Endothelial cell of umbilical vein (primary cell): ENCODE measurements at regions of chr5 and their contacts with region 1.

Region 1: GRCh38 chr5:10695055-10695649 is 65.9 kb downstream of the DAP start:
- DNase-seq: peak; percentile 72
- H3K4me3 ChIP-seq: no peak overlapping the region
- H3K27ac ChIP-seq: no peak overlapping the region
- H3K4me1 ChIP-seq: peaks cover 15% of the 10 kb centered on the region
- H3K27me3 ChIP-seq: no peaks in the 10 kb centered on the region
- CTCF ChIP-seq: peak; percentile 76 to 77
- POLR2A ChIP-seq: no peak

Region 2: DNA sequence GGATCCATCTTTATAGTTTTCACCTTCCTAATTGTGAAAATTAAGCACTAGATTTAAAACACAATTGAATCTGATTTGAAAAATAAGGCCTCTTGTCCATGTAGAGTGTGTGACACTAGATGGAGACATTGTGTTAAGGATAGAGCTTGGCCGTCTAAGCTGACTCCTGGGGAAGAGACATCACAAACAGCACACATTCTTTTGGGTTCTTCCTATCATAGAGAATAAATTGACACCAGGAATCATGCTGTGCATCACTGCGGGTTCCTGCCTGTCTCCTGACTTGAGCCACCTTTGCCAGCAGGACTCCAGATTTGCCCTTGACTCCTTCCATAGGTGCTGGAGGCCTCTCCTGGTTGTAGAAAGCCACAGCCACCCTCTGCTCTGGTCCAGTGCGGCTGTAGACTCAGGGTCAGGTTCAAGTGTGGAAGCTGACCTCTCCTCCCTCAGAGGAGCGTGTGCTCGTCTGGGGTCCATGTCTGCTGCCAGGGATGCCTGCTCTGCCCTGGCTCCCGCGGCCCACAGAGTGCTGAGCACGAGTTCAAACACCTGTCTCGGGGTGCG is 242.3 kb before region 1 on chr5:
- CTCF ChIA-PET with region 1: interaction called, 19 read pairs
- POLR2A ChIA-PET with region 1: no interaction called
- dilution Hi-C with region 1: no loop called
- intact Hi-C with region 1: no loop called
- DNase-seq: peak; percentile 87
- H3K4me3 ChIP-seq: no peak overlapping the region
- H3K27ac ChIP-seq: no peak overlapping the region
- H3K4me1 ChIP-seq: peaks cover 10% of the 10 kb centered on the region
- H3K27me3 ChIP-seq: no peaks in the 10 kb centered on the region
- CTCF ChIP-seq: peak; percentile 56 to 67
- POLR2A ChIP-seq: no peak

Region 3: GRCh38 chr5:10601246-10602030 is 93.7 kb before region 1 on chr5:
- CTCF ChIA-PET with region 1: no interaction called
- POLR2A ChIA-PET with region 1: no interaction called
- dilution Hi-C with region 1: no loop called
- intact Hi-C with region 1: no loop called
- DNase-seq: peak; percentile 97
- H3K4me3 ChIP-seq: no peak overlapping the region
- H3K27ac ChIP-seq: peak overlapping the region; percentile 39
- H3K4me1 ChIP-seq: peaks cover 11% of the 10 kb centered on the region
- H3K27me3 ChIP-seq: no peaks in the 10 kb centered on the region
- CTCF ChIP-seq: no peak
- POLR2A ChIP-seq: no peak

Region 4: DNA sequence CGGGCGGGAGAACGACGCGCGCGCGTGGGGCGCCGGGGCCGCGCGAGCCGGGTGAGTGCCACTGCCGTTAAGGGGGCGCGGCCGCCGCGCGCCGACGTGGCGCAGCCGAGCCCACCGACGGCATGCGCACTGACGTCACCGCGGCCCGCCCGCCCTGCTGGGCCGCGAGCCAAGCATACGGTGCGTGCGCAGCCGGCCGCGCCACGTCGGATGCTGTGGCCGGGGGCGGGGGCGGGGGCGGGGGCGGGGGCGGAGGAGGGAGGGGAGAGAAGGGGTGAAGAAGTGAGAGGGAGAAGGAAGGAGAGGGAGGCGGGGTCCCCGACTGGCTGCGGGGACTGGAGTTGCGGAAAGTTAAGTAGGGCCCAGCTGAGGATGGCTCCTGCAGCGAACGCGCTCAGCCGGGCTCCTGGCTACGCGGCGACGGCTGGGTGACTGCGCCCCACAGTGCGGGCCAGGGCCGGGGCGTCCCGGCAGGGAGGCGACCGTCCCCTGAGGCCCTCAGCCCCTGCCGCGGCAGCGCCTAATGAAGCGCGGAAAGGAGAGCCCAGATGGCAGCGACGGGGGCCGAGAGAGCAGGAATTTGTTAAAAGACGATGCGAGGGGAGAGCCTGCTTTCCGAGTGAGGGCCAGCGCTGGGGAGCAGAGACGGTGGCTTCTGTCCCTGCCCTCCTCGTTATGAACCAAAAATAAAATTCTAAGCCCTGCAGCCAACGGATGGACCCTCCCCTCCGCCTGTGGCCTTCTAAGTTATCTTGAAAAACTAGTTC is 66.2 kb after region 1 on chr5 and contains the start of gene DAP:
- CTCF ChIA-PET with region 1: interaction called, 5 read pairs
- POLR2A ChIA-PET with region 1: no interaction called
- dilution Hi-C with region 1: no loop called
- intact Hi-C with region 1: loop called (anchors 2 kb)
- DNase-seq: peak; percentile 85
- H3K4me3 ChIP-seq: peak within 1 kb of the TSS; percentile 62 to 95 (median 84)
- H3K27ac ChIP-seq: peak within 1 kb of the TSS; percentile 81
- H3K4me1 ChIP-seq: peaks cover 24% of the 10 kb centered on the region
- H3K27me3 ChIP-seq: no peaks in the 10 kb centered on the region
- CTCF ChIP-seq: no peak
- POLR2A ChIP-seq: peak; percentile 59
- total RNA-seq, gene DAP: 173 and 188 TPM in 2 replicates

Region 5: DNA sequence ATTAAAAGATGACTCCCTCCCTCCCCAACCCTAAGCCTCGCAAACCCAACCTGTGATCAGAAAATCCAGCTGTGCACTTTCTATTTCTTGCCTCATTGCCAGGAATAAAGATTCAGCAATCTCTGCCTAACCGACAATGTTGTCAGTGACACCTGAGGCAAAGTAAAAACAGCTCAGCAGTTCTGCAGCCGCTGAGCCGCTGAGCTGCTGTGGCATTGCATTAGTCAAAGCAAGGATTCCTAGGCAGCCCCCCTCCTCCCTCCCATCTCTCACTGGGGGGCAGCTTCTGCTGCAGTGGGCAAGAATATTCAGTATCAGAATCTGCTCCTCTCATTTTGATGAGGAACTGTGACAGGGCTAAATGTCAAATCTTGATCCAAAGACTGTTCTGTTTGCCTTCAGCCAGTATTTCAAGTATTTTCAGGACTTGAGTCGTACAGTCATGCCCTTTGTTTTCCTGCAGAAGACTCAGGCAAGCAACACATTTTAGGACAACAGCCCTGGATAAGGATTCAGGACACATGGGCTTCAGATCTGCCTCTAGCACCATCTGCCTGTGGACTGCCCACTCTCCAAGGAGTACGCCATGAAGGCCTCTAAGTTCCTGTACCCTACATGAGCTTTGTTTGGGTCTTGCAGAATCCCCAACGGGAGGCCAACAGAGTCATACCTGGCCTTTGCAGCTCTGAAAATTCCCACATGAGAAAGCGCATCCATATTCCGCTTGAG is 106.9 kb after region 1 on chr5:
- CTCF ChIA-PET with region 1: interaction called, 12 read pairs
- POLR2A ChIA-PET with region 1: no interaction called
- dilution Hi-C with region 1: no loop called
- intact Hi-C with region 1: no loop called
- DNase-seq: peak; percentile 8
- H3K4me3 ChIP-seq: no peak overlapping the region
- H3K27ac ChIP-seq: no peak overlapping the region
- H3K4me1 ChIP-seq: no peaks in the 10 kb centered on the region
- H3K27me3 ChIP-seq: peaks cover 6 to 15% of the 10 kb centered on the region in 2 experiments
- CTCF ChIP-seq: peak in 1 of 2 donors; percentile 17
- POLR2A ChIP-seq: no peak

Region 6: GRCh38 chr5:10987930-10988504 is 292.9 kb after region 1 on chr5:
- CTCF ChIA-PET with region 1: no interaction called
- POLR2A ChIA-PET with region 1: no interaction called
- dilution Hi-C with region 1: no loop called
- intact Hi-C with region 1: loop called (anchors 5 kb)
- DNase-seq: peak; percentile 20
- H3K4me3 ChIP-seq: no peak overlapping the region
- H3K27ac ChIP-seq: no peak overlapping the region
- H3K4me1 ChIP-seq: no peaks in the 10 kb centered on the region
- H3K27me3 ChIP-seq: no peaks in the 10 kb centered on the region
- CTCF ChIP-seq: peak; percentile 63 to 75
- POLR2A ChIP-seq: no peak

Region 7: GRCh38 chr5:11182441-11183268 is 487.5 kb after region 1 on chr5:
- CTCF ChIA-PET with region 1: interaction called, 4 read pairs
- POLR2A ChIA-PET with region 1: no interaction called
- dilution Hi-C with region 1: no loop called
- intact Hi-C with region 1: loop called (anchors 2 kb)
- DNase-seq: peak; percentile 20
- H3K4me3 ChIP-seq: no peak overlapping the region
- H3K27ac ChIP-seq: no peak overlapping the region
- H3K4me1 ChIP-seq: no peaks in the 10 kb centered on the region
- H3K27me3 ChIP-seq: no peaks in the 10 kb centered on the region
- CTCF ChIP-seq: peak; percentile 13 to 25
- POLR2A ChIP-seq: no peak

Region 8: DNA sequence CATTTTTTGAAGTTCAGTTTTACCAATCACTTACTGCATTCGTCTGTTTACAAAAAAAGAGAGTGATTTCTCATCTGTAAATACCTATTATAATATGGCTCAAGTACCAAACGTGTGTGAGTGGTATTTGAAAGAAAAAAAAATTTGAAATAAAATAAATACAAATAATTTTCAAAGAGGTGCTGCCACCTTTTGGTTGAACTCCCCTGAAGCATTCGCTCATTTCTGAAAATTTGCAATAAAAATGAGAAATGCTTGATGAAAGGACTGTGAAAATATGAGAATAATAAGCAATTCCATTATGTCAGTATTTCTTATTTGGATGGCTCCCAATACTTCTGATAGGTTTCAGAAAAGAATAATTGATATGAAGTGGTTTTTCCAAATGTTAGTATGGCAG is 799.2 kb after region 1 on chr5:
- CTCF ChIA-PET with region 1: no interaction called
- POLR2A ChIA-PET with region 1: no interaction called
- dilution Hi-C with region 1: no loop called
- intact Hi-C with region 1: loop called (anchors 10 kb)
- DNase-seq: no peak
- H3K4me3 ChIP-seq: no peak overlapping the region
- H3K27ac ChIP-seq: no peak overlapping the region
- H3K4me1 ChIP-seq: no peaks in the 10 kb centered on the region
- H3K27me3 ChIP-seq: no peaks in the 10 kb centered on the region
- CTCF ChIP-seq: no peak
- POLR2A ChIP-seq: no peak